Posterior vena cava (tissue), 2 donors: ENCODE measurements at regions of chr2 and their contacts with region 1.

Region 1: GRCh38 chr2:112839407-112840067 is 3.0 kb upstream of the IL1B start:
- DNase-seq: no peak

Region 2: GRCh38 chr2:111094691-111095090 is 1744.8 kb before region 1 on chr2:
- intact Hi-C with region 1: loop called in 1 of 2 experiments (anchors 5 kb)
- DNase-seq: no peak

Region 3: GRCh38 chr2:112054847-112055729 is 784.4 kb before region 1 on chr2 and contains the start of gene TMEM87B:
- intact Hi-C with region 1: no loop called
- DNase-seq: peak; percentile 100
- total RNA-seq, gene TMEM87B: 28.3 to 42.7 TPM

Region 4: DNA sequence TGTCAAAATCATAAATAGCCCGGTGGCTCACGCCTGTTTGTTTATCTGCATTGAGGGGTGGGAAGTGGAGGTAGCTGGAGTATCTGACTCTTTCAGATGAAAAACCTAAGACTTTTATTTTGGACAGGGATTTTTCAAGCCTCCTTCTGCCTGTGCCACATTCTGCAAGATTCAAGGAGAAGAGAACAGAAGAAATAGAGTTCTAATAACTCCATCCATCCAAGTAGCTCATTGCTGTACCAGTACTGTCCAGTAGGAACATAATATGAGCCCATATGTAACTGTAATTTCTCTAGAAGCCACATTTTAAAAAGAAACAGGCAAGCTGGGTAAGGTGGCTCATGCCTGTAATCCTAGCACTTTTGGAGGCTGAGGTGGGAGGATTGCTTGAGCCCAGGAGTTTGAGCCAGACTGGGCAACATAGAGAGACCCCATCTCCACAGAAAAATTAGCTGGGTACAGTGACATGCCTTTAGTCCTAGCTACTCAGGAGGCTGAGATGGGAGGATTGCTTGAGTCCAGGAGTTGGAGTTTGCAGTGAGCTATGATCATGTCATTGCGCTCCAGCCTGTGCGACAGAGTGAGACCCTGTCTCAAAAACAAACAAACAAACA is 154.2 kb before region 1 on chr2:
- intact Hi-C with region 1: no loop called
- DNase-seq: no peak

Region 5: GRCh38 chr2:112764071-112765044 is 75.2 kb before region 1 on chr2 and contains the start of gene CKAP2L:
- intact Hi-C with region 1: no loop called
- DNase-seq: peak; percentile 98
- total RNA-seq, gene CKAP2L: 0.24 to 0.65 TPM